T-cell (primary cell): ENCODE measurements at regions of chr2 and their contacts with region 1.

Region 1: GRCh38 chr2:64214281-64215115 is 70.3 kb upstream of the PELI1 start:
- DNase-seq: peak in 24 of 35 experiments; percentile 7 to 72 (median 30)
- ATAC-seq: peak; percentile 76 to 91 (median 84)
- H3K4me3 ChIP-seq: peak overlapping the region in 1 of 2 donors; percentile 18
- H3K4me3 Mint-ChIP-seq: peak overlapping the region; percentile 58 to 71 (median 61)
- H3K27ac ChIP-seq: peak overlapping the region; percentile 79
- H3K27ac Mint-ChIP-seq: peak overlapping the region; percentile 88 to 90
- H3K4me1 ChIP-seq: peaks cover 21 to 35% of the 10 kb centered on the region in 2 experiments
- H3K4me1 Mint-ChIP-seq: peaks cover 47 to 64% (median 52%) of the 10 kb centered on the region in 3 donors
- H3K27me3 ChIP-seq: no peaks in the 10 kb centered on the region
- H3K27me3 Mint-ChIP-seq: no peaks in the 10 kb centered on the region

Region 2: GRCh38 chr2:64324746-64325410 is 110.4 kb after region 1 on chr2:
- CTCF ChIA-PET with region 1: interaction called in 1 of 2 experiments, 3 read pairs
- POLR2A ChIA-PET with region 1: interaction called, 3 to 15 read pairs
- DNase-seq: no peak
- ATAC-seq: no peak
- H3K4me3 ChIP-seq: no peak overlapping the region
- H3K4me3 Mint-ChIP-seq: peak overlapping the region in 1 of 3 donors; percentile 17
- H3K27ac ChIP-seq: peak overlapping the region; percentile 66
- H3K27ac Mint-ChIP-seq: peak overlapping the region; percentile 98 to 99
- H3K4me1 ChIP-seq: peaks cover 32 to 60% of the 10 kb centered on the region in 2 experiments
- H3K4me1 Mint-ChIP-seq: peaks cover 42 to 58% (median 52%) of the 10 kb centered on the region in 3 donors
- H3K27me3 ChIP-seq: no peaks in the 10 kb centered on the region
- H3K27me3 Mint-ChIP-seq: no peaks in the 10 kb centered on the region

Region 3: GRCh38 chr2:64819774-64820696 is 605.5 kb after region 1 on chr2:
- CTCF ChIA-PET with region 1: no interaction called
- POLR2A ChIA-PET with region 1: interaction called in 1 of 2 experiments, 12 read pairs
- DNase-seq: peak; percentile 14 to 89 (median 65)
- ATAC-seq: peak; percentile 99
- H3K4me3 ChIP-seq: peak overlapping the region in 1 of 2 donors; percentile 5
- H3K4me3 Mint-ChIP-seq: peak overlapping the region; percentile 57 to 66 (median 63)
- H3K27ac ChIP-seq: peak overlapping the region; percentile 81
- H3K27ac Mint-ChIP-seq: peak overlapping the region; percentile 94 to 96
- H3K4me1 ChIP-seq: peaks cover 17 to 24% of the 10 kb centered on the region in 2 experiments
- H3K4me1 Mint-ChIP-seq: peaks cover 23 to 33% (median 28%) of the 10 kb centered on the region in 3 donors
- H3K27me3 ChIP-seq: no peaks in the 10 kb centered on the region
- H3K27me3 Mint-ChIP-seq: no peaks in the 10 kb centered on the region